T-cell (primary cell): ENCODE measurements at regions of chr3 and their contacts with region 1.

Region 1: DNA sequence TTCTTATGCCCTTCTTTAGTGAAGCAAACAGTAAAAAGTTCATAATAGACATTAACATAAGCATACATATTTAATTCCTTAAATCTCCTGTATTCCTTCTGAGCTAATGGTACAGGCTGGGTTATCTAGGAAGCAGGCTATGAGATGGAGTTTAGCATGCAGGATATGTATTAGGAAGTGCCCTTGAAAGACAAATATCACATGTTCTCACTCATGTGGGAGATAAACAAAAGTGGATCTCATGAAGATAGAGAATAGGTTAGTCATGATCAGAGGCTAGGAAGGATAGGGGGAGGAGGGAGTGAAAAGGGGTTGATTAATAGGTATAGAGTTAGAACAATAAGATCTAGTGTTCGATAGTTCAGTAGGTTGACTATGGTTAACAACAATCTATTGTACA is 105.4 kb downstream of the CLASP2 start:
- DNase-seq: no peak
- ATAC-seq: no peak
- H3K4me3 ChIP-seq: no peak overlapping the region
- H3K4me3 Mint-ChIP-seq: no peak overlapping the region
- H3K27ac ChIP-seq: no peak overlapping the region
- H3K27ac Mint-ChIP-seq: no peak overlapping the region
- H3K4me1 ChIP-seq: no peaks in the 10 kb centered on the region
- H3K4me1 Mint-ChIP-seq: peaks cover 0 to 5% (median 0%) of the 10 kb centered on the region in 3 donors
- H3K27me3 ChIP-seq: no peaks in the 10 kb centered on the region
- H3K27me3 Mint-ChIP-seq: no peaks in the 10 kb centered on the region

Region 2: DNA sequence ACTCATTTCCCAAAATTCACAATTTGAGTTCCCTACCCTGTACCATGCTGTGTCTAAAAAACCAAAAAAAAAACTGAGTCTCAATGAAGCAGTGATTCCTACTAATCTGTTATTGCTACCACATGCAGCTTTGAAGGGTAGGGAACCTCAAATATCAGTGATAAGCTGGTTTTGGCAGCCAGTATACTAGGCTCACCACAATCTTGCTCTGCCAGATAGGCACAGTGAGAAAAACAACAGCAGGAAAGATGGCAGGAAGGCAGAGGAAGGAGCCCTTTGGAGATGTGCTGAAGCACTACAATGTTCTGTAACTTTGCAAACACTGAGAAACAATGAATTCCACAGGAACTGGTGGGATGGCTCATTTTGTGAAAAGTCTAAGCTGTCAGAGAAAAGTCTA is 75.5 kb before region 1 on chr3:
- CTCF ChIA-PET with region 1: no interaction called
- POLR2A ChIA-PET with region 1: interaction called in 1 of 2 experiments, 11 read pairs
- DNase-seq: no peak
- ATAC-seq: no peak
- H3K4me3 ChIP-seq: no peak overlapping the region
- H3K4me3 Mint-ChIP-seq: peak overlapping the region in 1 of 3 donors; percentile 5
- H3K27ac ChIP-seq: no peak overlapping the region
- H3K27ac Mint-ChIP-seq: peak overlapping the region in 1 of 2 donors; percentile 2
- H3K4me1 ChIP-seq: no peaks in the 10 kb centered on the region
- H3K4me1 Mint-ChIP-seq: no peaks in the 10 kb centered on the region
- H3K27me3 ChIP-seq: no peaks in the 10 kb centered on the region
- H3K27me3 Mint-ChIP-seq: no peaks in the 10 kb centered on the region

Region 3: DNA sequence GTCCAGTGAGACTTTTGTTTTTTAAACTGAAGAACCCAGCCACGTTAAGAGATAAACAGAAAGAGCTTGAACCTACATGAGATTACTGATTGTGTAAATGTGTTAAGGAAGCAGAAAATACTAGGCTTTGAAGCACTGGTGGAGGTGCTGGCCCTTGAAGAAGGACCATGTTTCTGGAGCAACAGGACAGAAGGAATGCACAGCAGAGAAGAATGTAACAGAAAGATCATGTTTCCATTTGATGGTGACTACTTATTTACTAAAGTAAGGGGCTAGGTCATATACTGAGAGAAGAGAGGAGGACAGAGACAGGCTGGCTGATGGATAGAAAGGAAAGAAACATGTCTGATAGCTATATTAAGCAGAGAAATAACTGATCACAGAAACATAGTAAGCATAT is 16.6 kb after region 1 on chr3:
- CTCF ChIA-PET with region 1: no interaction called
- POLR2A ChIA-PET with region 1: no interaction called
- DNase-seq: no peak
- ATAC-seq: no peak
- H3K4me3 ChIP-seq: no peak overlapping the region
- H3K4me3 Mint-ChIP-seq: no peak overlapping the region
- H3K27ac ChIP-seq: no peak overlapping the region
- H3K27ac Mint-ChIP-seq: no peak overlapping the region
- H3K4me1 ChIP-seq: no peaks in the 10 kb centered on the region
- H3K4me1 Mint-ChIP-seq: no peaks in the 10 kb centered on the region
- H3K27me3 ChIP-seq: no peaks in the 10 kb centered on the region
- H3K27me3 Mint-ChIP-seq: no peaks in the 10 kb centered on the region